Ovary (tissue), 10 donors: ENCODE measurements at regions of chr4 and their contacts with region 1.

Region 1: GRCh38 chr4:139243448-139244365 is 36.3 kb downstream of the MGARP start:
- DNase-seq: peak in 2 of 5 donors; percentile 17 to 33
- H3K4me3 ChIP-seq: no peak overlapping the region
- H3K27ac ChIP-seq: no peak overlapping the region
- H3K4me1 ChIP-seq: peaks cover 2% of the 10 kb centered on the region
- H3K27me3 ChIP-seq: no peaks in the 10 kb centered on the region
- CTCF ChIP-seq: no peak
- EP300 ChIP-seq: no peak
- POLR2A ChIP-seq: no peak

Region 2: GRCh38 chr4:140839888-140840790 is 1596.4 kb after region 1 on chr4:
- intact Hi-C with region 1: loop called in 1 of 4 experiments (anchors 5 kb)
- DNase-seq: no peak
- H3K4me3 ChIP-seq: no peak overlapping the region
- H3K27ac ChIP-seq: no peak overlapping the region
- H3K4me1 ChIP-seq: no peaks in the 10 kb centered on the region
- H3K27me3 ChIP-seq: no peaks in the 10 kb centered on the region
- CTCF ChIP-seq: no peak
- EP300 ChIP-seq: no peak
- POLR2A ChIP-seq: no peak